OCI-LY7 (cell line): ENCODE measurements at regions of chr11 and their contacts with region 1.

Region 1: DNA sequence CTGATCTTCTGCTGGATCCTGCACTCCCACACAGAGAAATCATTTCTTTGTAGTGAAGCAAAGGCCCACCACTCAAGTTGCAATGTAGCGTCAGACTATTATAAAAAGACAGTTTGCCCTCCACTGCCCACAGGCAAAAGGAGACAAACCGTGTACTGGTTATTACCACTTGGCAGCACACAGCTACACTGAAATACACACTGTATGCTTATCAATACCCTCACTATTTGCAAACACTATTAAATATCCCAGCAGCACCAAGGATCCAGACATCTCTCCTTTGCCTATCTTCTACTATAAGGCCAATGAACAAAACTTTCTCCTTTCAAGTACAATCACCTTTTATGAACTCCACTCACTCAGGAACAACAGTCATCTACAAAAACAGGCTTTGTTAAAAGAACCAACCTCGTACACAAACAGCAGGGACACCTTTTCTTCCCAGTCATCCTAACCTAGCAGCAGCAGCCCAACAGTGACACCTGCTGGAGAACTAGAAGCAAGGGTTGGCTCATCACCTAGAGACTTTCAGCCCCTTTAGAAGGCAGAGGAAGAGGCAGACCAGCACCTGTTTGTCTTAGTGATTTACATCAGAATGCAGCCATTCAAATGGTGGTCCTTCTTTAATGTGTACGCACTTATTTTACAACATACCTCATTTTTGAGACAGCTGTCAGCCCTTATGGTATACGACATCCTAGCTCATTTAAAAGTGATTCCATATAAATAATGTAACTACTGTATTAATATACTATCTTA is 56.1 kb downstream of the AMBRA1 start:
- DNase-seq: peak; percentile 80
- H3K4me3 ChIP-seq: no peak overlapping the region
- H3K27ac ChIP-seq: no peak overlapping the region
- H3K4me1 ChIP-seq: peaks cover 4% of the 10 kb centered on the region
- CTCF ChIP-seq: peak; percentile 98

Region 2: GRCh38 chr11:46389450-46390253 is 148.1 kb before region 1 on chr11:
- CTCF ChIA-PET with region 1: interaction called, 3 read pairs
- POLR2A ChIA-PET with region 1: no interaction called
- intact Hi-C with region 1: loop called (anchors 1 kb)
- DNase-seq: peak; percentile 64
- H3K4me3 ChIP-seq: peak overlapping the region; percentile 50
- H3K27ac ChIP-seq: no peak overlapping the region
- H3K4me1 ChIP-seq: no peaks in the 10 kb centered on the region
- CTCF ChIP-seq: peak; percentile 85

Region 3: GRCh38 chr11:46489661-46490560 is 47.8 kb before region 1 on chr11:
- CTCF ChIA-PET with region 1: no interaction called
- POLR2A ChIA-PET with region 1: no interaction called
- intact Hi-C with region 1: loop called (anchors 1 kb)
- DNase-seq: peak; percentile 68
- H3K4me3 ChIP-seq: no peak overlapping the region
- H3K27ac ChIP-seq: no peak overlapping the region
- H3K4me1 ChIP-seq: no peaks in the 10 kb centered on the region
- CTCF ChIP-seq: peak; percentile 89